HEK293 (cell line): ENCODE measurements at regions of chr2 and their contacts with region 1.

Region 1: DNA sequence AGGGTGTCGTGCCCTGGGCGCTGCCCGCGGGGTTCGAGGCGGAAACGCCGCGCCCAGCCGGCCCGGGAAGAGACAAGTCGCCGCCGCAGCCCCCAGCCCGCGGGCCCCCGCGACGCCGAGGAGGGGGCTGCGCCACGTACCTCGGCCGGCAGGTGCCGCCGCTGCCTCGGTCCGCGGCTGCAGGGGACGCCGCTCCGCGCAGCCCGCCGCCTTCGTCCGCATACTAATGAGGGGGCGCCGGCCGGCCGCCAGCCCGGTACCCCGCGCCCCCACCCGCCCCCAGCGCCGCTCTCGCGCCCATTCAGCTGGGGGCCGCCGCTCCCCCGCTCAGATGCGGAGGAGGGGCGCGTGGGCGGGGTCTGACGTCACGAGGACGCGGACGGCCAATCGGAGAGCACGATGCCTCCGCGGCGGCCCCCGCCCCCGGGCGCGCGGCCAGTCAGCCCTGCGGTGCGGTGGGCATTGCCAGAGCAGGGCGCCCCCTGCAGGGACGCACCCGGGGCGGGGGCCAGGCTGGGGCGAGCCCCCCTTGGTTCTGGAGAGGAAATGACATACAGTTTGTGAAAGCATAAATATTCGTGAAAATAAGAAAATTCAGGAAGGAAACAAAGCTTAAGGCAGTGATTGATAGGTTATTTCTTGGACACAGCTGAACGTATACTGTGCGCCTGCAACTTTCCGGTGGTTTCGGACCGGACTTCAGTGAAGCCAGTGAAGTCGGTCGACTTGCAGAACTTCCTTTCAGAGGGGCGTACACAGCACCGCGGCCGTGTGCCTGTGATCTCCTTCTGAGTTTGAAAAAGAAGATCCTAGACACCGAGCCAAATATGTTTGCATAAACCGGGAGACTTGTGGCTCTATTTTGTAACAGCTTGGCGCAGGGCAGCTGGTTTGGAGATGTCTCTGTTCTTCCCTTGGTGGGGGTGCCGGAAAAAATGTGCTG is at the start of gene ST3GAL5:
- H3K4me3 ChIP-seq: peak within 1 kb of the TSS; percentile 60
- H3K27ac ChIP-seq: peak within 1 kb of the TSS; percentile 65; the same call in 1 of the 2 replicates
- H3K4me1 ChIP-seq: peaks cover 10% of the 10 kb centered on the region; the same call in 1 of the 2 replicates
- CTCF ChIP-seq: peak; percentile 74

Region 2: GRCh38 chr2:85737481-85737880 is 151.5 kb before region 1 on chr2:
- CTCF ChIA-PET with region 1: no interaction called
- POLR2A ChIA-PET with region 1: no interaction called
- H3K4me3 ChIP-seq: no peak overlapping the region
- H3K27ac ChIP-seq: no peak overlapping the region
- H3K4me1 ChIP-seq: peaks cover 4% of the 10 kb centered on the region
- CTCF ChIP-seq: no peak

Region 3: DNA sequence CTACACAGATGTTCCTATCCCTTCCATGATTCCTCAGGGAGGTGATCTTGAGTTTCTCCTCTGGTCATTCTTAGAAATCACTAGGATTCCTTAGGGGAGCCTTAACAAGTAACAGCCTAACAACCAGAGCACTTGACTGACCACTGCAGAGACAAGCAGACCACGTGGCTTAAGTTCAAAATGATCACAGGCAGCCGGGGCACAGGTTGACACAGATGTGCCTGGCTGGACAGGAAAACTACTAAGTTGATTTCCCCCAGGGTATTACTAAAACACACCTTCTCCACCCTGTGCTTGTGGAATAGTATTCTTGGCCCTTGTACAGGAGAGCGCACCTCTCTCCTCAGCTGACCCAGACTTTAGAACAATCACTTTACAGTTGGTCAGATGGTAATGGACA is 30.1 kb before region 1 on chr2:
- CTCF ChIA-PET with region 1: interaction called, 10 read pairs
- POLR2A ChIA-PET with region 1: no interaction called
- H3K4me3 ChIP-seq: no peak overlapping the region
- H3K27ac ChIP-seq: no peak overlapping the region
- H3K4me1 ChIP-seq: no peaks in the 10 kb centered on the region
- CTCF ChIP-seq: no peak

Region 4: DNA sequence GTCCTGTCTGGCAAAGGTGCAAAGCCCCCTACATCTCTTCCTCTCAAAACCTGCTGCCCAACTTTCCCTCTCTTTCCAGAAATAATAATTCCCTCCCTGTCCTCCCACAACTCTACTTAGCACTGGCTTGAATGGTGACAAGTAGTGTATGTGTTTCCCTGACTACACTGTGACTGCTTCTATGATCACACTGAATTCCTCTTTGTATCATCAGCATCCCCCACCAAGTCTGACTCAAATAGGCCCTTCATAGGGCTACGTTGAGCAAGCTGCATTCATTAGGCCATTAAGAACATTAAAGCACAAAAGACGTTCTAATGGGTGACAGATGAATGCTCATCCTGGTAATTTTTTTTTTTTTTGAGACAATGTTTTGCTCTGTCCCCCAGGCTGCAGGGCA is 13.5 kb after region 1 on chr2:
- CTCF ChIA-PET with region 1: interaction called, 13 read pairs
- POLR2A ChIA-PET with region 1: interaction called, 6 read pairs
- H3K4me3 ChIP-seq: no peak overlapping the region
- H3K27ac ChIP-seq: no peak overlapping the region
- H3K4me1 ChIP-seq: no peaks in the 10 kb centered on the region
- CTCF ChIP-seq: no peak

Region 5: DNA sequence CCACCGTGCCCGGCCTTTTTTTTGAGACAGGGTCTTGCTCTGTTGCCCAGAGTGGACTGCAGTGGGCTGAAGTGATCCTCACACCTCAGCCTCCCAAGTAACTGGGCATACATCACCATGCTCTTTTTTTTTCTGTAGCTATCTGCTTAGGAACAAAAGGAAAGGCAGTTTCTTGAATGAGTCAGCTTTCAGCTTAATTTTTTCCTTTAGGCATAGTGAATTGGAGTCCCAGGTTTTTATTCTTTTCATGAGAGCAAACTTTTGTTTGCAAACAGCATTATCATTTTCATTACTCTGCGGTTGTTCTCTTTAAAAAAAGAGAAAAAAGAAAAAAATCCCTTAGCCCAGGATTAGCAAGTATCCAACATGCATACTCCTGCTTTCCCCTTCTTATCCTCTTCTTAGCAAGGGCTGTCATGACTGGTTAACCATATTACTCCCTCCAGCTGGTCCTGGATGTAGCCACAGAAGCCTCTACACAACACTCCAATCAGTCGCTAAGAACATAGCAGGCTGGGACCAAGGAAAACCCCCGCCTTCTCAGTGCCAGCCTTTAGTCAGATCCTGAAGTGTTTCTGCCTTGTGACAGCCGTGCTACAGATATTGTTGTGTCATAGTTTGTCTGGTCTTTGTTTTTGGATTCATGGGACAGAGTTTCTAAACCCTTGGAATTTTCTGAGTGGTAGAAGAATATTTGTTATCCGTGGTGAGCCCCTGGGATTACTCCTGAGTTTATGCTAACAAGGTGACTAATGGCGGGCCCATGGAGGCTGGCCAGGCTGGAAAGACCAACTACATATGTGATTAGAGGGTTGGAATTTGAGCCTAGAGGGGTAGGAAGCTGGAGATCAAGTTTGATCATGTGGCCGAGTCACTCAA is 23.1 kb after region 1 on chr2:
- CTCF ChIA-PET with region 1: interaction called, 11 read pairs
- POLR2A ChIA-PET with region 1: no interaction called
- H3K4me3 ChIP-seq: no peak overlapping the region
- H3K27ac ChIP-seq: no peak overlapping the region
- H3K4me1 ChIP-seq: no peaks in the 10 kb centered on the region
- CTCF ChIP-seq: no peak

Region 6: DNA sequence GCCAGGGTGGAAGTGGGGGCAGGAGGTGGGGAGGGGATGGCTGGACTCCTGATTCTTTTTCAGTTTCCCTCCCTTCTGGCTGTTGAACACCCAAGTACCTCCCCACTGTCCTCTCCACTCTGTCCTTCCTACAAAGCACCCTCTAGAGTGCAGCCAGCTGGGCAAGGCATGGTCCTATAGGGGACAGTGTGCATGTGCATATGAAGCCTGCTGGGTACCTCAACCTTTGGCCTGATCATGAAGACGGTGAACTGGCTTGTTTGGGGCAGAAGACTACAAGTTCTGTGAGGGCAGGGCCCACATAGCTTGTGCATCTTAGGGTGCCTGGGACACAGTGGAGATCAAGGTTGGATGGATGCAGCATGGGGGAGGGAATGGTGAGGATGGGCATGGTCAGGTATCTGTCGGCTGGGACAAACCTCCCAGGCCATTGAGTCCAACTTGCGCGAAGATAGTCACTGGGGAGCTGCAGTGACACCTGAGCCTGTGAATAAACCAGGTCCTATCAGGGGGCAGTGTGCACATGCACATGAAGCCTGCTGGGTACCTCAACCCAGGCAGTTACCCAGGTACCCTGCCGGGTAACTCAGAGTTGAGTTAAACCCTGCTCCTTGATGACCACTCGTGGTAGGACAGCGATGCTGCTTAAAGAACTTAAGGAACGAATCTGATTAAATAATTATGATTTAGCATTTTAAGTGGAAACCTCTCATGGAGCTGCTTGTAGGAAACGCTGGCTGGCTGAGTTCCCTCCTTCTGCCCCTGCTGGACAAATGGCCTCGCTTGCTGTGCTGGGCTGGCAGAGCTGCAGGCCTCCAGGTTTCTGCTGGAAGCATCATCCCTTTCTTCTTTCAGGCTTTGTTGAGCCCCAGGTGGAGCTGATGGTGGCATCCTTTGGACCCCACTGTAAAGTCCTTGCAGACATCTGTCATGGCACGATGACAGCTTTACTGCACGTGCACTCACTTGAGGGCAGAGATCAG is 132.7 kb after region 1 on chr2:
- CTCF ChIA-PET with region 1: interaction called, 10 read pairs
- POLR2A ChIA-PET with region 1: no interaction called
- H3K4me3 ChIP-seq: no peak overlapping the region
- H3K27ac ChIP-seq: no peak overlapping the region
- H3K4me1 ChIP-seq: no peaks in the 10 kb centered on the region
- CTCF ChIP-seq: no peak

Region 7: DNA sequence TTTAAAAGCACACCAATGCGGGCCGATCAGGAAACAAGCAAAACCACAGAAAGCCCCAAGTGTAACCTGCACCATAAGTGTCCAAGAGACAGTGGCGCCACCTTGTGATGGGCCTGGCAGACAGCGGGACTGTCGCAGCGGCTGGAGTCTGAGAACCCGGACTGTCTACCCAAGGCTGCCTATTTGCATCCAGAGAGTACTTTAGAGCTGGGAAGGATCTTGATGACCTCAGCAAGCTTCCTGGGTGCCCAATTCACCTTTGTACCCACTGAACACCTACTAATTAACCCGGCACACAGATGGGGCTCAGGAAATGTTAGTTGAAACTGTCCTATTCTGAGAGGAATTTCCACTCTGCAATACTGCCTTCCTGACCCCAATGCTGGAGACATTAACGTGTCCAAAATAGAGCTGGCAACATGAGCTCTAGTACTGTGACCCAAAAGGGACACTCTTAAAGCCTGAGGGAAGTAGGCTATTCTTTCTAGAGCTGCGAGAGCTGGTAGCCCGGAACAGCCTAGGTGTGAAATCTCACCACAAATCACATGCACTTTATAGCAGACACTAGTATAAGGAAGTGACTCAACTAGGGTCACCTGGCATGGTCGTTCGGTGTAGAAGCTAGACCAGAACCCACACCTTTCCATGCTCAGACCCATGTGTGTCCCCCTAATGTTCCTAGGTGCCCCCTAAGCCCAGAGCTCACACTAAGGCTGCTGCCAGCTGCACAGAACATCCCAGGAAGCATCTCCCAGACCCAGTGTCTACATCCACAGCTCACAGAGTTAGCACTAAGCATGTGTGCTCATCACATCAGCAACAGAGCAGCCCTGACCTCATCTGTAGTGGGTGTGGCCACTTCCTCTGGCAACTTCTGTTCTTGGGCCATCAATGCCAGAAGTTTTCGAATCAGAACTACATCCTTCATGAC is 191.3 kb after region 1 on chr2:
- CTCF ChIA-PET with region 1: interaction called, 21 read pairs
- POLR2A ChIA-PET with region 1: no interaction called
- H3K4me3 ChIP-seq: no peak overlapping the region
- H3K27ac ChIP-seq: no peak overlapping the region
- H3K4me1 ChIP-seq: no peaks in the 10 kb centered on the region
- CTCF ChIP-seq: peak; percentile 54